ENCODE measurements at regions of chr1 and their contacts with region 1.

Region 1: GRCh38 chr1:25895365-25895993 is 10.7 kb downstream of the STMN1 start:
- DNase-seq: peak; percentile 86
- H3K4me3 Mint-ChIP-seq: no peak overlapping the region
- H3K27ac Mint-ChIP-seq: peak overlapping the region; percentile 58
- H3K4me1 Mint-ChIP-seq: peaks cover 24% of the 10 kb centered on the region
- H3K27me3 Mint-ChIP-seq: no peaks in the 10 kb centered on the region

Region 2: GRCh38 chr1:25905680-25906643 is 10.5 kb after region 1 on chr1 and contains the start of gene STMN1:
- intact Hi-C with region 1: loop called (anchors 1 kb)
- DNase-seq: peak; percentile 83
- H3K4me3 Mint-ChIP-seq: peak within 1 kb of the TSS; percentile 93
- H3K27ac Mint-ChIP-seq: peak within 1 kb of the TSS; percentile 92
- H3K4me1 Mint-ChIP-seq: peaks cover 30% of the 10 kb centered on the region
- H3K27me3 Mint-ChIP-seq: peaks cover 15% of the 10 kb centered on the region
- total RNA-seq, gene STMN1: 334 and 341 TPM in 2 replicates